Esophagus squamous epithelium (tissue), 5 donors: ENCODE measurements at regions of chr3 and their contacts with region 1.

Region 1: GRCh38 chr3:73502609-73503583 is 121.8 kb downstream of the PDZRN3 start:
- DNase-seq: no peak
- H3K4me3 ChIP-seq: no peak overlapping the region
- H3K27ac ChIP-seq: peak overlapping the region in 1 of 4 donors; percentile 1
- H3K4me1 ChIP-seq: peaks cover 0 to 22% (median 0%) of the 10 kb centered on the region in 3 donors
- H3K27me3 ChIP-seq: no peaks in the 10 kb centered on the region
- CTCF ChIP-seq: peak; percentile 17 to 82 (median 76)
- POLR2A ChIP-seq: no peak

Region 2: GRCh38 chr3:73848173-73848906 is 345.4 kb after region 1 on chr3:
- intact Hi-C with region 1: loop called (anchors 10 kb)
- DNase-seq: no peak
- H3K4me3 ChIP-seq: no peak overlapping the region
- H3K27ac ChIP-seq: no peak overlapping the region
- H3K4me1 ChIP-seq: no peaks in the 10 kb centered on the region
- H3K27me3 ChIP-seq: no peaks in the 10 kb centered on the region
- CTCF ChIP-seq: peak; percentile 14 to 79 (median 60)
- POLR2A ChIP-seq: no peak